Activated CD8-positive, alpha-beta T cell treated with anti-CD3 and anti-CD28 coated beads, Interleukin-2, amount 10 ng/mL, durations not matched to agents 7 days and 5 days (primary cell): ENCODE measurements at regions of chr16 and their contacts with region 1.

Region 1: GRCh38 chr16:27515874-27516353 is 33.8 kb downstream of the GTF3C1 start:
- DNase-seq: peak; percentile 48
- ATAC-seq: peak; percentile 79
- H3K4me3 Mint-ChIP-seq: no peak overlapping the region
- H3K27ac Mint-ChIP-seq: no peak overlapping the region
- H3K4me1 Mint-ChIP-seq: no peaks in the 10 kb centered on the region
- H3K27me3 Mint-ChIP-seq: no peaks in the 10 kb centered on the region

Region 2: DNA sequence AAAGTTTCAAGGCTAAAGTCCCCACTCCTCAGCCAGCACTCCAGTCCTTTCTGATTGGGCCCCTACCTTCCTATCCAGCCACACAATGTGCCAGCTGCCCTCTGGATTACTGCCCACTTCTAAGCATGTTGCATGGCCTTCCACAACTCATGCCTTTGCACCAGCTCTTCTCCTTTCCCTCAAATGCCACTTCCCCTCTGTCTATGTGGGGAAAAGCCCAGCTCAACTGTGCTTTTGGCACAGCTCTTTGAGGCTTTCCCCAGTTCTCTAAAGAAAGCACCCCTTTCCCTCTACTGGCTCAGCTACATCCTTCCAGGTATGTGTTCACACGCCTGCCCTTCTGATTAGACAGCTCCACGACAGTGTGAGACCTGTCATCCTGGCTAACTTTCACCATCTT is 15.3 kb after region 1 on chr16:
- CTCF ChIA-PET with region 1: interaction called, 11 read pairs
- POLR2A ChIA-PET with region 1: no interaction called
- DNase-seq: no peak
- ATAC-seq: no peak
- H3K4me3 Mint-ChIP-seq: no peak overlapping the region
- H3K27ac Mint-ChIP-seq: peak overlapping the region; percentile 22
- H3K4me1 Mint-ChIP-seq: peaks cover 17% of the 10 kb centered on the region
- H3K27me3 Mint-ChIP-seq: no peaks in the 10 kb centered on the region

Region 3: DNA sequence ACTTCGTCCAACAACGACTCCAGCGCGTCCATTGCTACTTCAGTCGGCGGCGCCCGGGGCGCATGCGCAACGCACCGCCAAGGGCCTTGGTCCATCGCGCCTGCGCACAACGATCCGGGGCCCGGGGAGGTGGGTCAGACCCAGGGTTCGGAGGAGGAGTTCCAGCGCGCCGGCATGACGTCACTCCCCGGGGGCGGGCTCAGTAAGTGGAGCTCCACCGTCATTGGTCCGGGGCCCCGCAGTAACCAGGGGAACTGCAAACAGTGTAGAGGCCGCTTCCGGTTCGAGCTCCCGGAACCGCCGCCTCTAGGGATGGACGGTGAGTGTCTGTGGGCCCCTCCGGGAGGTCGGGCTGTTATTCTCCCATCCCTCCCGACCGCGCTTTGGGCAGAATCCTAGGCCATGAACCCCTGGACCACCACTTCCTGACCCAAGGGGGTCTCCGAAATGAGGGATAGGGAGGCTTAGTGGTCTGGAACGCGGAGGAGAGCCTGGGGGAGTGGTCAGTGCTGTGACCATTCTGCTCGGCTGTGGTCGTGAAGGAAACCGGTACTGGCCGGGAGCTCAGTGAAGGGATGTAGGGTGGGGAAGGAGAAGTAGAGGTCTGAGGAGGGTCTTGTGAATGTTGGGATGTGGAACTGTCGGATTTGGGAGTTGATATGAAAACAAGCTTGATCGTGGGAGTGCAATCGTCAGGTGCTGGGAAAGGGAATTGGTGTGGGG is 34.1 kb after region 1 on chr16 and contains the starts of genes GTF3C1 and KATNIP:
- CTCF ChIA-PET with region 1: interaction called, 11 read pairs
- POLR2A ChIA-PET with region 1: no interaction called
- DNase-seq: peak; percentile 100
- ATAC-seq: peak; percentile 95
- H3K4me3 Mint-ChIP-seq: peak within 1 kb of the TSS; percentile 98
- H3K27ac Mint-ChIP-seq: peak within 1 kb of the TSS; percentile 96
- H3K4me1 Mint-ChIP-seq: peaks cover 36% of the 10 kb centered on the region
- H3K27me3 Mint-ChIP-seq: no peaks in the 10 kb centered on the region
- total RNA-seq, gene GTF3C1: 55.8 to 58.5 TPM
- total RNA-seq, gene KATNIP: 18.6 to 19.0 TPM

Region 4: GRCh38 chr16:27618606-27619327 is 102.9 kb after region 1 on chr16:
- CTCF ChIA-PET with region 1: no interaction called
- POLR2A ChIA-PET with region 1: no interaction called
- DNase-seq: no peak
- ATAC-seq: no peak
- H3K4me3 Mint-ChIP-seq: no peak overlapping the region
- H3K27ac Mint-ChIP-seq: no peak overlapping the region
- H3K4me1 Mint-ChIP-seq: no peaks in the 10 kb centered on the region
- H3K27me3 Mint-ChIP-seq: no peaks in the 10 kb centered on the region